ENCODE measurements at regions of chr9 and their contacts with region 1.

Region 1: GRCh38 chr9:125746017-125746773 is 978 bp upstream of the PBX3 start:
- DNase-seq: peak; percentile 74
- ATAC-seq: peak; percentile 95
- H3K4me3 ChIP-seq: peak overlapping the region; percentile 64 to 74
- H3K27ac ChIP-seq: peak overlapping the region; percentile 73; the same call in 1 of the 2 replicates
- H3K4me1 ChIP-seq: peaks cover 17% of the 10 kb centered on the region
- H3K27me3 ChIP-seq: no peaks in the 10 kb centered on the region
- CTCF ChIP-seq: no peak

Region 2: GRCh38 chr9:125558453-125559092 is 187.6 kb before region 1 on chr9:
- CTCF ChIA-PET with region 1: no interaction called
- POLR2A ChIA-PET with region 1: no interaction called
- in situ Hi-C with region 1: no loop called
- intact Hi-C with region 1: loop called (anchors 5 kb)
- DNase-seq: peak; percentile 39
- ATAC-seq: peak; percentile 83; the same call in 1 of the 2 replicates
- H3K4me3 ChIP-seq: no peak overlapping the region
- H3K27ac ChIP-seq: no peak overlapping the region
- H3K4me1 ChIP-seq: no peaks in the 10 kb centered on the region
- H3K27me3 ChIP-seq: no peaks in the 10 kb centered on the region
- CTCF ChIP-seq: peak; percentile 80

Measured in Panc1 (cell line).